PC-9 (cell line): ENCODE measurements at regions of chr15 and their contacts with region 1.

Region 1: DNA sequence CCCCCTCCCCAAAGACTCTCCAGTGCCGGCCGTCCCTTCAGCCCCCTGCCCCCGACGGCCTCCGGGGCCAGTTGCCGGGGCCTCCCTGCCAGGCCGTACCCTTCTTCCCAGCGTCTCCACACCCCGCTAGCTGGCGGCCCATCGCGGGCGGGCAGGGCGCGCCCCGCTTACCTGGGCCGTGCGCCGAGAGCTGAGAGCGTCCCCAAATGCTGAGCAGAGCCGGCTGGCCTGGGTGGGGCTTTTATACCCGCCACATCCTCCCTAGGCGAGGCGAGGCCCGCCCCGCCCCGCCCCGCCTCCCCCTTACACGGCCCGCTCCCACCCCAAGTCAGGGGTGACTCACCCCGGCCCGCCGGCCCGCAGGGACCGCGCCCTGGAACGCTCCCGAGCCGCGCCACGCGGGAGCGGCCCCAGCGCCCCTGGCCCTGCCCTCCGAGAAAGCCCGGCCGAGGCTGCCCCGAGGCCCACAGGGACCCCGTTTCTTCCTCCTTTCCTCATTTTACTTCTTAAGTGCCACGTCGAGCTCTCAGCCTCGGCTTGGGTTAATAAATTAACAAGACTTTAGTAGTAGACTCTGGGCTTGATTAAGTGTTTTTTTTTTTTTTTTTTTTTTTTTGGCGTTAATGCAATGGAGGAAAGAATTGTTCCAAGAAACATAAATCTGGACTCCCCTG is at the start of gene ANXA2:
- DNase-seq: peak; percentile 54 to 90
- H3K4me3 ChIP-seq: peak within 1 kb of the TSS; percentile 68
- H3K27ac ChIP-seq: peak within 1 kb of the TSS; percentile 94
- H3K4me1 ChIP-seq: peaks cover 51% of the 10 kb centered on the region
- H3K27me3 ChIP-seq: no peaks in the 10 kb centered on the region
- CTCF ChIP-seq: no peak
- total RNA-seq, gene ANXA2: 1,720 and 1,743 TPM in 2 replicates

Region 2: DNA sequence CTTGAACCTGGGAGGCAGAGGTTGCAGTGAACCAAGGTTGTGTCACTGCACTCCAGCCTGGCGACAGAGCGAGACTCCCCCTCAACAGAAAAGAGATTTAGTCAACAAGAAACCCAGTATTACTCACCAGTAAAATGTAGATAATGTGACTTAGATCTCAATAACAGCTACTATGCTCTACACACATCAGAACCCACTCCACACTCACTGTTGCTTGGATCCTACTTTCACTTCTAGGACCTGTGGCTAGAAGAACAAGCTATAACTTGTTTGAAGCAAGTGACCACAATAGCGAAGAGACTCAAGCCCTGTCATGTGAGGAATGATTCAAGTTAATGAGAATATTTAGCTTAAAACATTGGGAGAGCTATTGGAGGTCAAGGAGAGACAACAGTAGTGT is 100.9 kb before region 1 on chr15:
- CTCF ChIA-PET with region 1: no interaction called
- POLR2A ChIA-PET with region 1: no interaction called
- intact Hi-C with region 1: no loop called
- DNase-seq: no peak
- H3K4me3 ChIP-seq: no peak overlapping the region
- H3K27ac ChIP-seq: no peak overlapping the region
- H3K4me1 ChIP-seq: no peaks in the 10 kb centered on the region
- H3K27me3 ChIP-seq: no peaks in the 10 kb centered on the region
- CTCF ChIP-seq: no peak

Region 3: DNA sequence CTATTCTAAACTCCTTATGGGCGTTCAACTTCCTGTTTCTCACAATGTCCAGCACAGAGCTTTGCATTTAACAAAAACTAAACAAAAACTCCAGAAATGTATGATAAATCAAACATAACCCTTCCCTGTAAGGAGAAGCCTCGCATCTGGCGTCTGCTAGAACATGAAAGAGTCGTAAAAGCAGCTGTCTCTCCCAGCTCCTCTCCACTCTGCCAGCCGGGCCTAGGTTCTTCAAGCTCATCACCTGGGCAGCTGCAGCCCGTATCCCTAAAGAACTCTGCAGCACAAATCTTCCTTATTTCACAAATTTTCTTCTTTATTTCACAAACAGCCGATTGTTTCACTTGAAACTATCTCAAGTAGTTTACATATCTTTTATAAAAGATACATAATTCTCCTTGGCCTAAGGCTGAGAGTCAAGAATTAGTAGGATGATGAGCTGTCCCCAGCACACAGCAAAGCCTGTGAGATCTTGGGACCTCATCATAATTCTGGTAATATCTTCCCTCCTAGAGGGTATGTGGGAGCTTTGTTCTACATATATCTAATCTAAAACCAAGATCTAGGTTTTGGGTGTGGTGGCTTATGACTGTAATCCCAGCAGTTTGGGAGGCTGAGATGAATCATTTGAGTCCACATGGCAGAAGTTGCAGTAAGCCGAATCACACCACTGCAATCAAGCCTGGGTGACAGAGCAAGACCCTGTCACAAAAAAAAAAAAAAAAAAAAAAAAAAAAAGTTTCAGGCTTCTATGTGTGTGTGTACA is 35.4 kb before region 1 on chr15:
- CTCF ChIA-PET with region 1: no interaction called
- POLR2A ChIA-PET with region 1: interaction called, 5 read pairs
- intact Hi-C with region 1: loop called (anchors 5 kb)
- DNase-seq: peak; percentile 53 to 83
- H3K4me3 ChIP-seq: no peak overlapping the region
- H3K27ac ChIP-seq: peak overlapping the region; percentile 76
- H3K4me1 ChIP-seq: peaks cover 24% of the 10 kb centered on the region
- H3K27me3 ChIP-seq: no peaks in the 10 kb centered on the region
- CTCF ChIP-seq: no peak

Region 4: DNA sequence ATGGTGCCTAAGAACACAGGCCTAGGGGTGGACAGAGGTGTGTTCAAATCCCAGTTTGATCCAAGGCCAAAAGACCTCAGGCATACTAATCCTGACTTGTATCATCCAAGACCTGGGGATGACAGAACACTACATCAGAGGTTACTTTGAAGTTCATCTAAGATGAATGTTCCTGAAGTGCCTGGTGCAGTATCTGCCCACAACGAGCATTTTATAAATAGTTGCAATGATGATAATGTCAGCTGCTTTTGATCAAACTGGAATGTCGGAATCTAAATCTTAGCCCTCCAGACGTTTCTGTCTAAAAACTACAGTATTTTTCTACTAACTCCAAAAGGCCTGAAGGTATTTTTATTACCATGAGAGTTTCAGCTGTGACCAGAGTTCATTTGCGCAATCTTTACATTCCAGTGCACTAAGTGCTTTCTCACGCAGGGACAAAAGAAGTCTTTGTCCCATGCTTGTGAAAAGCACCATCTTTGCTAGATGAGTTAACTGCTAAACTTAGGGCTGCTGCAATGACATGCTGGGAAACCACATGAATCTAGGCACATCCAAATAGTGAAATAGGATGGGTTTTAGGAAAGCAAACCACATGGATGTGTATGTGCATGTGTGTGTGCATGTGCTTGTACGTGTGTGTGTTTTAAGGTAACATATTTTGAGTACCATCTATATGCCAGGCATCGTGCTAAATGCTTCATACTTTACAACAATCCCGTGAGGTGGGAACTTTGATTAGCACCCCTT is 18.2 kb before region 1 on chr15:
- CTCF ChIA-PET with region 1: interaction called, 4 read pairs
- POLR2A ChIA-PET with region 1: interaction called, 24 read pairs
- intact Hi-C with region 1: loop called (anchors 1 kb)
- DNase-seq: peak; percentile 56 to 86
- H3K4me3 ChIP-seq: no peak overlapping the region
- H3K27ac ChIP-seq: peak overlapping the region; percentile 90
- H3K4me1 ChIP-seq: peaks cover 35% of the 10 kb centered on the region
- H3K27me3 ChIP-seq: no peaks in the 10 kb centered on the region
- CTCF ChIP-seq: no peak

Region 5: GRCh38 chr15:60414016-60414682 is 16.2 kb after region 1 on chr15:
- CTCF ChIA-PET with region 1: no interaction called
- POLR2A ChIA-PET with region 1: interaction called, 12 read pairs
- intact Hi-C with region 1: no loop called
- DNase-seq: peak in 1 of 2 experiments; percentile 63
- H3K4me3 ChIP-seq: no peak overlapping the region
- H3K27ac ChIP-seq: peak overlapping the region; percentile 50; the same call in 1 of the 2 replicates
- H3K4me1 ChIP-seq: peaks cover 16% of the 10 kb centered on the region
- H3K27me3 ChIP-seq: no peaks in the 10 kb centered on the region
- CTCF ChIP-seq: no peak

Region 6: GRCh38 chr15:60444289-60444912 is 46.5 kb after region 1 on chr15:
- CTCF ChIA-PET with region 1: interaction called, 3 read pairs
- POLR2A ChIA-PET with region 1: interaction called, 40 read pairs
- intact Hi-C with region 1: loop called (anchors 1 kb)
- DNase-seq: no peak
- H3K4me3 ChIP-seq: no peak overlapping the region
- H3K27ac ChIP-seq: no peak overlapping the region
- H3K4me1 ChIP-seq: no peaks in the 10 kb centered on the region
- H3K27me3 ChIP-seq: no peaks in the 10 kb centered on the region
- CTCF ChIP-seq: peak; percentile 60

Region 7: GRCh38 chr15:60520825-60521368 is 123.0 kb after region 1 on chr15:
- CTCF ChIA-PET with region 1: no interaction called
- POLR2A ChIA-PET with region 1: no interaction called
- intact Hi-C with region 1: loop called (anchors 1 kb)
- DNase-seq: peak; percentile 36 to 68
- H3K4me3 ChIP-seq: no peak overlapping the region
- H3K27ac ChIP-seq: peak overlapping the region; percentile 92
- H3K4me1 ChIP-seq: peaks cover 33% of the 10 kb centered on the region
- H3K27me3 ChIP-seq: no peaks in the 10 kb centered on the region
- CTCF ChIP-seq: peak; percentile 88